Mammary epithelial cell (primary cell): ENCODE measurements at regions of chr2 and their contacts with region 1.

Region 1: DNA sequence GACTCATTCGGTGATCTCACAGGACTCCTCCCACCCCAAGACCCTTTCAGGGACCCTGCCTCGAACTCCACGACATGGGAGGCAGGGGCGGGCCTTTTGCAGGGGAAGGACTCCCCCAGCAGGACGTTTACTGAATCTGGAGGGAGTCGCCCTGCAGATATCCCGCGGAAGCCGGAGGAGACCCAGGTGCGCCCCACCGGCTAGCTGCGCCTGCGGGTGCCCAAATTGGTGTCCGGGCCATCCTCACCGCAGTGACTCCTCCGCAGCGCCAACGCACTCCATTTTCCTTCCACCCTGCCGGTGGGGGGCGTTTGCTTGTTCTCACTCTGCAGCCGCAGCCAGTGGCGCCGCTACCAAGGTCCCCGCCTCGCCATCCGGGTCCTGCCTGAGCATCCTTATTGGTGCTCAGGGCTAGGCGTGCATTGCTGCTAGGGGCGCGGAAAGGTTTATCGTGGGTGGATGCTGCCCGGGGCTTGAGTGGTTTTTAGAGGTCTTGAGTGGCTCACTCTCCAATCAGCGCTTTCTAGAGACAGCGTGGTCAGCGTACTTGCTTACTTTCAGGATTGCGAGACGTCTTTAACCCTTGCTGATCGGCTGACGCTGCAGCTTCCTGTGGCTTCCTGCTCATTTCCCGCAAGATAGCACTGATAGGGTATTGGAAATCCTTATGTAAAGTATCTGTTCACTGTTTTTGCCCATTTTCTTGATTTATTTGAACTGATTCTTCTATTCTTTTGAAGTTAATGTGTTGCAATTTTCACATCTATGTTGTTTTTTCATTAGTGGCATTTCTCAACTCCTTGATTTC is 81.4 kb downstream of the BIN1 start:
- DNase-seq: peak; percentile 70
- H3K4me3 ChIP-seq: peak overlapping the region; percentile 18 to 36 (median 35)
- H3K27ac ChIP-seq: no peak overlapping the region
- H3K4me1 ChIP-seq: peaks cover 9% of the 10 kb centered on the region
- H3K27me3 ChIP-seq: no peaks in the 10 kb centered on the region
- CTCF ChIP-seq: peak in 1 of 2 donors; percentile 28

Region 2: GRCh38 chr2:125041846-125042245 is 1983.7 kb before region 1 on chr2:
- CTCF ChIA-PET with region 1: no interaction called
- dilution Hi-C with region 1: no loop called
- in situ Hi-C with region 1: no loop called
- intact Hi-C with region 1: no loop called
- DNase-seq: no peak
- H3K4me3 ChIP-seq: no peak overlapping the region
- H3K27ac ChIP-seq: no peak overlapping the region
- H3K4me1 ChIP-seq: no peaks in the 10 kb centered on the region
- H3K27me3 ChIP-seq: no peaks in the 10 kb centered on the region
- CTCF ChIP-seq: no peak

Region 3: GRCh38 chr2:126971481-126972278 is 53.9 kb before region 1 on chr2:
- CTCF ChIA-PET with region 1: no interaction called
- dilution Hi-C with region 1: no loop called
- in situ Hi-C with region 1: no loop called
- intact Hi-C with region 1: loop called (anchors 5 kb)
- DNase-seq: peak; percentile 34
- H3K4me3 ChIP-seq: peak overlapping the region; percentile 24 to 46 (median 31)
- H3K27ac ChIP-seq: no peak overlapping the region
- H3K4me1 ChIP-seq: peaks cover 4% of the 10 kb centered on the region
- H3K27me3 ChIP-seq: no peaks in the 10 kb centered on the region
- CTCF ChIP-seq: peak; percentile 53 to 94

Region 4: GRCh38 chr2:127039387-127040031 is 13.9 kb after region 1 on chr2:
- CTCF ChIA-PET with region 1: interaction called, 10 read pairs
- dilution Hi-C with region 1: no loop called
- in situ Hi-C with region 1: no loop called
- intact Hi-C with region 1: no loop called
- DNase-seq: no peak
- H3K4me3 ChIP-seq: no peak overlapping the region
- H3K27ac ChIP-seq: no peak overlapping the region
- H3K4me1 ChIP-seq: no peaks in the 10 kb centered on the region
- H3K27me3 ChIP-seq: no peaks in the 10 kb centered on the region
- CTCF ChIP-seq: no peak